Activated CD8-positive, alpha-beta T cell treated with anti-CD3 and anti-CD28 coated beads for 36 hours (primary cell): ENCODE measurements at regions of chr16 and their contacts with region 1.

Region 1: GRCh38 chr16:72832621-72833248 is 215.2 kb downstream of the ZFHX3 start:
- DNase-seq: peak; percentile 77
- ATAC-seq: peak; percentile 88
- H3K4me3 Mint-ChIP-seq: no peak overlapping the region
- H3K27ac Mint-ChIP-seq: no peak overlapping the region
- H3K4me1 Mint-ChIP-seq: peaks cover 4% of the 10 kb centered on the region
- H3K27me3 Mint-ChIP-seq: no peaks in the 10 kb centered on the region
- CTCF ChIP-seq: peak; percentile 95

Region 2: GRCh38 chr16:72787130-72787513 is 45.6 kb before region 1 on chr16:
- CTCF ChIA-PET with region 1: interaction called, 12 read pairs
- POLR2A ChIA-PET with region 1: no interaction called
- intact Hi-C with region 1: no loop called
- DNase-seq: no peak
- ATAC-seq: peak; percentile 2
- H3K4me3 Mint-ChIP-seq: peak overlapping the region; percentile 76
- H3K27ac Mint-ChIP-seq: peak overlapping the region; percentile 83
- H3K4me1 Mint-ChIP-seq: peaks cover 37% of the 10 kb centered on the region
- H3K27me3 Mint-ChIP-seq: peaks cover 20% of the 10 kb centered on the region
- CTCF ChIP-seq: no peak

Region 3: GRCh38 chr16:72811188-72811720 is 21.5 kb before region 1 on chr16:
- CTCF ChIA-PET with region 1: interaction called, 14 read pairs
- POLR2A ChIA-PET with region 1: no interaction called
- intact Hi-C with region 1: no loop called
- DNase-seq: no peak
- ATAC-seq: no peak
- H3K4me3 Mint-ChIP-seq: no peak overlapping the region
- H3K27ac Mint-ChIP-seq: no peak overlapping the region
- H3K4me1 Mint-ChIP-seq: no peaks in the 10 kb centered on the region
- H3K27me3 Mint-ChIP-seq: peaks cover 6% of the 10 kb centered on the region
- CTCF ChIP-seq: no peak

Region 4: GRCh38 chr16:72847187-72848027 is 14.7 kb after region 1 on chr16:
- CTCF ChIA-PET with region 1: interaction called, 27 read pairs
- POLR2A ChIA-PET with region 1: no interaction called
- intact Hi-C with region 1: no loop called
- DNase-seq: peak; percentile 40
- ATAC-seq: peak; percentile 58
- H3K4me3 Mint-ChIP-seq: no peak overlapping the region
- H3K27ac Mint-ChIP-seq: no peak overlapping the region
- H3K4me1 Mint-ChIP-seq: peaks cover 7% of the 10 kb centered on the region
- H3K27me3 Mint-ChIP-seq: peaks cover 5% of the 10 kb centered on the region
- CTCF ChIP-seq: peak; percentile 38

Region 5: DNA sequence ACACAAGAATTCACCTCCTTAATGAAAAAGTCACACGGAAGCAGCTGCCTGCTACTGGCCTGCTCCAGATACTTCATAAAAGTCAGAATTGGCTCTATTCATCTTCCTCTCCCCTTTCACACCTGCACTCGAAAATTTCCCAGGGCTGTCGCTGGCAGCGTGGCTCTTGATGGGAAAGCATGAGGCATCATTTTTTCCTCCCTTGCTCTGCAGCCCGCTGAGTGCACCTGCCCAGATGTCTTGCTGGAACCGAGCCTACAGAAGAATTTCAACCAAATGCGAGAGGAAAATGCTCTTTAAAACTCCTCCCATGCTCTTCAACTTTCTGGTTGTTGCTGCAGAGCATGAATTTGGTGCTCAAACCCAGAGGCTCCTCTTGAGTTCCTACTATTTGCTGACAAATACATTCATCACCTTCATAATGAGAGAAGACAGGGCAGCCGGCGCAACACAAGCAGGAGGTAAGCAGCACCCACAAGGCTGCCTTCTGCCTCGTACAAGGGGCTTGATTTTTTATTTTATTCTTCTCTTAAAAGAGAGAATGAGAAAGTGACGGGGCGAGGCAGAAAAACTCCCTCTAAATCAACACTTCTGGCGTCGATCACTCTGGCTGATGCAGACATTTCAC is 68.4 kb after region 1 on chr16:
- CTCF ChIA-PET with region 1: no interaction called
- POLR2A ChIA-PET with region 1: no interaction called
- intact Hi-C with region 1: no loop called
- DNase-seq: no peak
- ATAC-seq: no peak
- H3K4me3 Mint-ChIP-seq: no peak overlapping the region
- H3K27ac Mint-ChIP-seq: no peak overlapping the region
- H3K4me1 Mint-ChIP-seq: no peaks in the 10 kb centered on the region
- H3K27me3 Mint-ChIP-seq: no peaks in the 10 kb centered on the region
- CTCF ChIP-seq: no peak

Region 6: GRCh38 chr16:72989579-72990551 is 157.1 kb after region 1 on chr16:
- CTCF ChIA-PET with region 1: interaction called, 3 read pairs
- POLR2A ChIA-PET with region 1: no interaction called
- intact Hi-C with region 1: loop called (anchors 10 kb)
- DNase-seq: no peak
- ATAC-seq: no peak
- H3K4me3 Mint-ChIP-seq: no peak overlapping the region
- H3K27ac Mint-ChIP-seq: no peak overlapping the region
- H3K4me1 Mint-ChIP-seq: no peaks in the 10 kb centered on the region
- H3K27me3 Mint-ChIP-seq: no peaks in the 10 kb centered on the region
- CTCF ChIP-seq: no peak

Region 7: DNA sequence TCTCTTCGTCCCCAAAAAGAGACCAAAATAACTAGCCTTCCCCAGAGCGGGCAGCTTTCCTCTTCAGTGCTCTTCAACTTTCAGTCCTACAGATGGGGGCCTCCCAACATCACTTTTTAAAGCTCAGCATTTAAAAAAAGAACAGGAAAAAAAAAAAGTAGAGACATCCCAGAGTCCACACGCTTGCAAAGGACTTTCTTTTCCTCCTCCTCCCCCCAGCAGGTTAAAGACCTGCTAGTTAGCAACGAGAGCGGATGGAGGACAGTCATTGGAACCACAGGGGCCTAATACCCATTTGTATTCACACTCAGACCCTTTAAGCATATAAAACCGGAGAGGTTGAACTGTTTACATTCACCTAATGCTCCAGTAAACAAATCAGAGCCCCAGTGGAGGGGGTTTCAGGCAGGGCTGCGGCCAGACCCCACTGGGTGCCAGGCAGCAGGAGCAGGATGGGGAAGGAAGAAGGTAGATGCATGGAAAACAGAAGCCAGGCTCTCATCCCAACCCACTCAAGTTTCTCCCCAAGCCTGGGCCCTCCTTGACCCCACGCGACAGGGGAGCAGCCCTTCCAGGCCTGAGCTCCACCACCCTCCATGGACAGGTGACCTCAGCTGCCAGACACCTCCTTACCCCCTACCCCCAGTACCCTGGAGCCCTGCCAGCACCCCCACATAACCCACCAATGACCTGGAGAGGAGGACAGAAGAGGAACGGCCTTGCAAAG is 200.0 kb after region 1 on chr16:
- CTCF ChIA-PET with region 1: no interaction called
- POLR2A ChIA-PET with region 1: no interaction called
- intact Hi-C with region 1: no loop called
- DNase-seq: no peak
- ATAC-seq: no peak
- H3K4me3 Mint-ChIP-seq: no peak overlapping the region
- H3K27ac Mint-ChIP-seq: no peak overlapping the region
- H3K4me1 Mint-ChIP-seq: peaks cover 3% of the 10 kb centered on the region
- H3K27me3 Mint-ChIP-seq: peaks cover 17% of the 10 kb centered on the region
- CTCF ChIP-seq: no peak